ENCODE measurements at regions of chr2 and their contacts with region 1.

Region 1: GRCh38 chr2:138373993-138374408 is 127.6 kb upstream of the SPOPL start:
- DNase-seq: peak; percentile 59
- ATAC-seq: peak; percentile 56; the same call in 1 of the 2 replicates
- H3K4me3 ChIP-seq: no peak overlapping the region
- H3K27ac ChIP-seq: no peak overlapping the region
- H3K4me1 ChIP-seq: no peaks in the 10 kb centered on the region
- H3K27me3 ChIP-seq: no peaks in the 10 kb centered on the region
- CTCF ChIP-seq: peak; percentile 89

Region 2: DNA sequence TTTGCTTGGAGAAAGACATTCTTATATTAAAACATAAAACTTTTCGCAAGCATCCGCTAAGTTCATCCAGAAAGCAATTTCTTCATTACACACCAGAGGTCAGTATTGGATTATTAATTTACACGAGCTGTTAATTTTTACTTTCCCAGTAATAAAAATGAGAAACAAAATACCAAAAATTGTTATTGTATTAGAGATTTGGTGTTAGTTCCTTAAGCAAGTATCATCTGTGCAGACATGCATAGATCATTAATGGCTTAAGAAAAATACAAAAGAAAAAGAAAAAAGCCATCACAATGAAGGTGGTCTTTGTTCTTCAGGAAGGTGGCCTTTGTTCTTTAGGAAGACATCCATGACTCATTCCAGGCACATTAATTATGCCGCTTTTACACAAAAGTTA is 463.4 kb before region 1 on chr2:
- CTCF ChIA-PET with region 1: no interaction called
- POLR2A ChIA-PET with region 1: no interaction called
- intact Hi-C with region 1: loop called (anchors 1 kb)
- DNase-seq: peak; percentile 71
- ATAC-seq: no peak
- H3K4me3 ChIP-seq: no peak overlapping the region
- H3K27ac ChIP-seq: no peak overlapping the region
- H3K4me1 ChIP-seq: no peaks in the 10 kb centered on the region
- H3K27me3 ChIP-seq: no peaks in the 10 kb centered on the region
- CTCF ChIP-seq: peak; percentile 83

Region 3: DNA sequence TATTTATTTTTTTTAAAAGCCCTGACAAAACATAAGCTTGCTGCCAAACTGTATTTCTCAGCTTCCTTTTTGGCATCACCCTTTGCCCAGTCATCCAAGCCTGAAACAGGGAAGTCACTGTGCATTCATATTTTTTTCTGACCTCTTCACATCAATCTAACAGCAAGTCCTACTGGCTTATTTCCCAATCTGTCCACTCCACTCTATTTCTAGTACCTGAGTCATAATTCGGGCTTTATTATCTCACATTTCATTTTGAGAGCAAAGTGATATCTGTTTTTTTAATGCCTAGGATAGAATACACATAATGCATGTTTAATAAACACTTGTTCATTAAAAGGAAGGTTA is 404.6 kb before region 1 on chr2:
- CTCF ChIA-PET with region 1: no interaction called
- POLR2A ChIA-PET with region 1: no interaction called
- intact Hi-C with region 1: loop called (anchors 5 kb)
- DNase-seq: peak; percentile 94
- ATAC-seq: peak; percentile 89
- H3K4me3 ChIP-seq: no peak overlapping the region
- H3K27ac ChIP-seq: peak overlapping the region; percentile 75
- H3K4me1 ChIP-seq: peaks cover 46% of the 10 kb centered on the region
- H3K27me3 ChIP-seq: no peaks in the 10 kb centered on the region
- CTCF ChIP-seq: no peak

Region 4: GRCh38 chr2:138180692-138181386 is 193.2 kb before region 1 on chr2:
- CTCF ChIA-PET with region 1: no interaction called
- POLR2A ChIA-PET with region 1: no interaction called
- intact Hi-C with region 1: loop called (anchors 5 kb)
- DNase-seq: peak; percentile 10
- ATAC-seq: no peak
- H3K4me3 ChIP-seq: no peak overlapping the region
- H3K27ac ChIP-seq: no peak overlapping the region
- H3K4me1 ChIP-seq: no peaks in the 10 kb centered on the region
- H3K27me3 ChIP-seq: no peaks in the 10 kb centered on the region
- CTCF ChIP-seq: peak; percentile 38; the same call in 1 of the 2 replicates

Region 5: GRCh38 chr2:138501425-138502283 is 127.7 kb after region 1 on chr2 and contains the start of gene SPOPL:
- CTCF ChIA-PET with region 1: no interaction called
- POLR2A ChIA-PET with region 1: no interaction called
- intact Hi-C with region 1: loop called (anchors 2 kb)
- DNase-seq: peak; percentile 92
- ATAC-seq: peak; percentile 88
- H3K4me3 ChIP-seq: peak within 1 kb of the TSS; percentile 93
- H3K27ac ChIP-seq: peak within 1 kb of the TSS; percentile 80
- H3K4me1 ChIP-seq: peaks cover 39% of the 10 kb centered on the region
- H3K27me3 ChIP-seq: no peaks in the 10 kb centered on the region
- CTCF ChIP-seq: no peak
- total RNA-seq, gene SPOPL: 9.3 and 10.2 TPM in 2 replicates

Region 6: GRCh38 chr2:138787053-138787666 is 413.2 kb after region 1 on chr2:
- CTCF ChIA-PET with region 1: interaction called, 4 read pairs
- POLR2A ChIA-PET with region 1: no interaction called
- intact Hi-C with region 1: loop called (anchors 1 kb)
- DNase-seq: peak; percentile 74
- ATAC-seq: no peak; the same call in 1 of the 2 replicates
- H3K4me3 ChIP-seq: no peak overlapping the region
- H3K27ac ChIP-seq: no peak overlapping the region
- H3K4me1 ChIP-seq: no peaks in the 10 kb centered on the region
- H3K27me3 ChIP-seq: peaks cover 12% of the 10 kb centered on the region
- CTCF ChIP-seq: peak; percentile 89